ENCODE measurements at regions of chr9 and their contacts with region 1.

Region 1: GRCh38 chr9:87324613-87325194 is 173.0 kb upstream of the DAPK1 start:
- DNase-seq: peak; percentile 68
- ATAC-seq: peak; percentile 91
- H3K4me3 ChIP-seq: no peak overlapping the region
- H3K27ac ChIP-seq: no peak overlapping the region
- H3K4me1 ChIP-seq: no peaks in the 10 kb centered on the region
- H3K27me3 ChIP-seq: 0 out of 2 replicates have a peak, but pooled peaks cover 2% of the 10 kb centered on the region
- CTCF ChIP-seq: peak; percentile 85
- POLR2A ChIP-seq: 0 out of 2 replicates have a peak, but pooled peaks have one; percentile 39
- RAD21 ChIP-seq: peak; percentile 98

Region 2: DNA sequence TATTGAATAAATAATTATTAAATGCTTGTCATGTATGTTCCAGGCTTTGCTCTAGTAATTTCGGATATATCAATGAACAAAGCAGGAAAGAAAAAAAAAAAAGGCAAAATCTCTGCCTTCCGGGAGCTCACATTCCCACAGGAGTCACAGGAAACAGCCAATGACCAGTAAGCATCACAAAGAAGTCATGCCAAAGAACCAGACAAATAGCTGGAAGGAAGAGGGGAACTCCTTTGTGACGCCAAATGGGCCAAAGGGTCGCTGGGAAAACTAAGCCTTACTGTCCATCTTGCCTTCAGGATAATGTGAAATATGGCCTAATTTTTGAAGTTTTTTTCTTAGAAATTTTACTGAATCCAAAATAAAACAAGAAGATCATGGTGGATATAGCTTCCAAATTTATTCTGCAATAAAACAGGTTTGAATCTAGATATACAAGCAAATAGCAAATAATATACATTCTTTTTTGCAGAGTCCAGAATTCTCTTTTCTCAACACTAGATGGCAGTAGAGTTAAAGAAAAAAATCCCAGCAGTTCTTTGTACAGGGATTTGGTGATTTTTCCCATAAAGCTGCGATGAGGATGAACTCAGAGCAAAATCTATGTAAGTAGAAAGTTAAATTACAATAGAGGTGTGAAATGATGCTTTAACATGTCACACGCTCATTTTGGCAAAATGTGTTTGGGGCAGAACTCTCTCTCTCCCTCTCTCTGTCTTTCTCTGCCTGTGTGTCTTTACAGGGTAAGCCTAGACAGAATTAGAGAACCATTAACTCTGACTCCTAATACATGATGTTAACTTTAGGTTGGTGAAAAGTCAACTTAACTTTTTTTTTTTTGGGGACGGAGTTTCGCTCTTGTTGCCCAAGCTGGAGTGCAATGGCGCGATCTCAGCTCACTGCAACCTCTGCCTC is 910.5 kb before region 1 on chr9:
- CTCF ChIA-PET with region 1: interaction called, 6 read pairs
- POLR2A ChIA-PET with region 1: no interaction called
- dilution Hi-C with region 1: no loop called
- in situ Hi-C with region 1: no loop called
- intact Hi-C with region 1: loop called (anchors 1 kb)
- DNase-seq: peak; percentile 50
- ATAC-seq: peak; percentile 80
- H3K4me3 ChIP-seq: no peak overlapping the region
- H3K27ac ChIP-seq: no peak overlapping the region
- H3K4me1 ChIP-seq: peaks cover 2% of the 10 kb centered on the region
- H3K27me3 ChIP-seq: no peaks in the 10 kb centered on the region
- CTCF ChIP-seq: peak; percentile 70
- POLR2A ChIP-seq: no peak
- RAD21 ChIP-seq: peak; percentile 70

Region 3: GRCh38 chr9:86486891-86487837 is 837.5 kb before region 1 on chr9:
- CTCF ChIA-PET with region 1: interaction called, 3 read pairs
- POLR2A ChIA-PET with region 1: no interaction called
- dilution Hi-C with region 1: no loop called
- in situ Hi-C with region 1: loop called (anchors 5 kb)
- intact Hi-C with region 1: loop called (anchors 1 kb)
- DNase-seq: peak; percentile 76
- ATAC-seq: peak; percentile 85
- H3K4me3 ChIP-seq: no peak overlapping the region
- H3K27ac ChIP-seq: no peak overlapping the region
- H3K4me1 ChIP-seq: peaks cover 5% of the 10 kb centered on the region; the same call in 1 of the 2 replicates
- H3K27me3 ChIP-seq: no peaks in the 10 kb centered on the region
- CTCF ChIP-seq: peak; percentile 90
- POLR2A ChIP-seq: peak; percentile 36; the same call in 1 of the 2 replicates
- RAD21 ChIP-seq: peak; percentile 98

Region 4: GRCh38 chr9:86637515-86637914 is 687.2 kb before region 1 on chr9:
- CTCF ChIA-PET with region 1: no interaction called
- POLR2A ChIA-PET with region 1: no interaction called
- dilution Hi-C with region 1: no loop called
- in situ Hi-C with region 1: loop called (anchors 10 kb)
- intact Hi-C with region 1: loop called (anchors 1 kb)
- DNase-seq: peak; percentile 39
- ATAC-seq: peak; percentile 62
- H3K4me3 ChIP-seq: no peak overlapping the region
- H3K27ac ChIP-seq: no peak overlapping the region
- H3K4me1 ChIP-seq: no peaks in the 10 kb centered on the region; the same call in 1 of the 2 replicates
- H3K27me3 ChIP-seq: 0 out of 2 replicates have a peak, but pooled peaks cover 2% of the 10 kb centered on the region
- CTCF ChIP-seq: peak; percentile 62
- POLR2A ChIP-seq: no peak
- RAD21 ChIP-seq: peak; percentile 83

Region 5: DNA sequence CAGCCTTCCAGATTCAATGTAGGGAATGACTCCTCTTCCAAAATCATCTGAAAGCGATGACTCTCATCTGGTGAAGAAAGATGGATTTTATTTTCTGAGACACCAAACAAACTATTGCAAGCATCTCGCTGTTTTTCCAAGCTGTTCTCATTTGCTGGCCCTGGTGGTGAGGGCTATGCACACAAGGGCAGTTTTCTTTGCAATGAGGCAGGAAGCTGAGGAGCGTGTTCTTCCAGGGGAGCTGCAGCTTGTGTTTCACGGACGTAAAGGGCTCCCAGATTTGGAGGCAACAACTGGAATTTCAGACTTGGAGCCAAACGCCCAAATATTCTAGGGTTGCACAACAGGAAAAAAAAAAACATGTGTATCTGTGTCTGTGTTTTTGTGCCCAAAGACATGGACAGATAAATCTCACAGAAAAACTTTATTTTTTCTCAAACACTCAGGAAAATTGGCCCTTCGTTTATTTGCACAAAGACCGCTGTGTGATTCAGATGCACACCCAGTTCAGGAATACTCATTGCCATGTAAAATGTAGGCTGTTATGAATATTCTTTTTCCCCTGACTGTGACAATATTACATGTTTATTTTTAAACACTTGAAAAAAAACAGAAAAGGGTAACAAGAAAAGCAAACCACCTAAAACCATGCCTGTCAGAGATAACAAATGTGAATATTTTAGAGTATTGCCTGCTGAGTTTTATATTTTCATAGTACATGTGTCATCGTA is 528.7 kb before region 1 on chr9:
- CTCF ChIA-PET with region 1: no interaction called
- POLR2A ChIA-PET with region 1: no interaction called
- dilution Hi-C with region 1: no loop called
- in situ Hi-C with region 1: no loop called
- intact Hi-C with region 1: loop called (anchors 10 kb)
- DNase-seq: peak; percentile 83
- ATAC-seq: peak; percentile 83
- H3K4me3 ChIP-seq: no peak overlapping the region
- H3K27ac ChIP-seq: peak overlapping the region; percentile 16; the same call in 1 of the 2 replicates
- H3K4me1 ChIP-seq: peaks cover 9% of the 10 kb centered on the region
- H3K27me3 ChIP-seq: no peaks in the 10 kb centered on the region
- CTCF ChIP-seq: peak; percentile 24; the same call in 1 of the 2 replicates
- POLR2A ChIP-seq: no peak
- RAD21 ChIP-seq: 0 out of 2 replicates have a peak, but pooled peaks have one; percentile 19

Region 6: GRCh38 chr9:87099407-87099806 is 225.3 kb before region 1 on chr9:
- CTCF ChIA-PET with region 1: no interaction called
- POLR2A ChIA-PET with region 1: no interaction called
- dilution Hi-C with region 1: no loop called
- in situ Hi-C with region 1: no loop called
- intact Hi-C with region 1: no loop called
- DNase-seq: no peak
- ATAC-seq: no peak
- H3K4me3 ChIP-seq: no peak overlapping the region
- H3K27ac ChIP-seq: no peak overlapping the region
- H3K4me1 ChIP-seq: peaks cover 2% of the 10 kb centered on the region
- H3K27me3 ChIP-seq: no peaks in the 10 kb centered on the region
- CTCF ChIP-seq: no peak
- POLR2A ChIP-seq: no peak
- RAD21 ChIP-seq: no peak

Region 7: GRCh38 chr9:87193925-87194868 is 130.5 kb before region 1 on chr9:
- CTCF ChIA-PET with region 1: no interaction called
- POLR2A ChIA-PET with region 1: no interaction called
- dilution Hi-C with region 1: no loop called
- in situ Hi-C with region 1: no loop called
- intact Hi-C with region 1: loop called (anchors 5 kb)
- DNase-seq: peak; percentile 94
- ATAC-seq: peak; percentile 95
- H3K4me3 ChIP-seq: no peak overlapping the region; the same call in 1 of the 2 replicates
- H3K27ac ChIP-seq: peak overlapping the region; percentile 78
- H3K4me1 ChIP-seq: peaks cover 14% of the 10 kb centered on the region
- H3K27me3 ChIP-seq: 0 out of 2 replicates have a peak, but pooled peaks cover 5% of the 10 kb centered on the region
- CTCF ChIP-seq: no peak
- POLR2A ChIP-seq: no peak
- RAD21 ChIP-seq: no peak

Region 8: GRCh38 chr9:87370003-87370685 is 45.4 kb after region 1 on chr9:
- CTCF ChIA-PET with region 1: no interaction called
- POLR2A ChIA-PET with region 1: no interaction called
- dilution Hi-C with region 1: no loop called
- in situ Hi-C with region 1: no loop called
- intact Hi-C with region 1: no loop called
- DNase-seq: no peak
- ATAC-seq: peak; percentile 40
- H3K4me3 ChIP-seq: no peak overlapping the region
- H3K27ac ChIP-seq: no peak overlapping the region
- H3K4me1 ChIP-seq: no peaks in the 10 kb centered on the region
- H3K27me3 ChIP-seq: no peaks in the 10 kb centered on the region; the same call in 1 of the 2 replicates
- CTCF ChIP-seq: no peak
- POLR2A ChIP-seq: no peak
- RAD21 ChIP-seq: no peak

Measured in IMR-90 (cell line).